ENCODE measurements at regions of chr13 and their contacts with region 1.

Region 1: GRCh38 chr13:45623515-45624090 is 8.1 kb upstream of the ERICH6B start:
- DNase-seq: peak in 3 of 14 experiments; percentile 11 to 49 (median 41)
- ATAC-seq: no peak
- H3K4me3 ChIP-seq: no peak overlapping the region
- H3K4me3 Mint-ChIP-seq: no peak overlapping the region
- H3K27ac ChIP-seq: no peak overlapping the region
- H3K27ac Mint-ChIP-seq: no peak overlapping the region
- H3K4me1 ChIP-seq: peaks cover 9% of the 10 kb centered on the region
- H3K4me1 Mint-ChIP-seq: no peaks in the 10 kb centered on the region
- H3K27me3 ChIP-seq: peaks cover 14 to 24% of the 10 kb centered on the region in 2 experiments
- H3K27me3 Mint-ChIP-seq: peaks cover 48% of the 10 kb centered on the region
- CTCF ChIP-seq: peak; percentile 64

Region 2: DNA sequence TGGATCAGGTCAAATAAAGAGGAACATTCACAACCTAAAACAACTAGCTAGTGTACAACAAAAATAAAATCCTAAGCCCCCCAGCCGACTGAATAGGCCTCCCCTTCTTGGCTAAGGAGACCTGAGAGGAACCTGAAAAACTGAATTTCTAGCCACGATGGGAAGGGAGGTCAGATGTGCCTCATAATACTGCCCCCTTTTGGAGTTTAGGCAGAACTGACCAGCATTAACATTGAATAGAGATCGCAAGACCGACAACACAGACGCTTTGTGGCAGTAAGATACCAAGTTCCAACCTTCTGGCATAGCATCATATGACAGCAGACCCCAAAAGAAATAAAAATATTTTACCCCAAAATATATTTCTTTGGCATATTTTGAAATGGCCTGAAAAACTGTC is 94.5 kb after region 1 on chr13:
- CTCF ChIA-PET with region 1: no interaction called
- POLR2A ChIA-PET with region 1: no interaction called
- intact Hi-C with region 1: loop called (anchors 1 to 5 kb)
- DNase-seq: peak in 3 of 14 experiments; percentile 13 to 36 (median 18)
- ATAC-seq: peak; percentile 41
- H3K4me3 ChIP-seq: no peak overlapping the region
- H3K4me3 Mint-ChIP-seq: no peak overlapping the region
- H3K27ac ChIP-seq: no peak overlapping the region
- H3K27ac Mint-ChIP-seq: no peak overlapping the region
- H3K4me1 ChIP-seq: no peaks in the 10 kb centered on the region
- H3K4me1 Mint-ChIP-seq: no peaks in the 10 kb centered on the region
- H3K27me3 ChIP-seq: no peaks in the 10 kb centered on the region
- H3K27me3 Mint-ChIP-seq: no peaks in the 10 kb centered on the region
- CTCF ChIP-seq: peak; percentile 28

Region 3: GRCh38 chr13:45879670-45880069 is 256.1 kb after region 1 on chr13:
- CTCF ChIA-PET with region 1: no interaction called
- POLR2A ChIA-PET with region 1: no interaction called
- intact Hi-C with region 1: loop called in 1 of 2 experiments (anchors 10 kb)
- DNase-seq: peak in 5 of 14 experiments; percentile 5 to 25 (median 11)
- ATAC-seq: no peak
- H3K4me3 ChIP-seq: no peak overlapping the region
- H3K4me3 Mint-ChIP-seq: no peak overlapping the region
- H3K27ac ChIP-seq: no peak overlapping the region
- H3K27ac Mint-ChIP-seq: no peak overlapping the region
- H3K4me1 ChIP-seq: no peaks in the 10 kb centered on the region
- H3K4me1 Mint-ChIP-seq: no peaks in the 10 kb centered on the region
- H3K27me3 ChIP-seq: no peaks in the 10 kb centered on the region
- H3K27me3 Mint-ChIP-seq: no peaks in the 10 kb centered on the region
- CTCF ChIP-seq: peak; percentile 21